GM23248 (cell line): ENCODE measurements at regions of chr16 and their contacts with region 1.

Region 1: GRCh38 chr16:77971306-77972271 is 50.8 kb upstream of the CLEC3A start:
- DNase-seq: peak; percentile 85
- H3K4me3 ChIP-seq: no peak overlapping the region
- H3K27ac ChIP-seq: no peak overlapping the region
- H3K4me1 ChIP-seq: no peaks in the 10 kb centered on the region
- H3K27me3 ChIP-seq: no peaks in the 10 kb centered on the region

Region 2: DNA sequence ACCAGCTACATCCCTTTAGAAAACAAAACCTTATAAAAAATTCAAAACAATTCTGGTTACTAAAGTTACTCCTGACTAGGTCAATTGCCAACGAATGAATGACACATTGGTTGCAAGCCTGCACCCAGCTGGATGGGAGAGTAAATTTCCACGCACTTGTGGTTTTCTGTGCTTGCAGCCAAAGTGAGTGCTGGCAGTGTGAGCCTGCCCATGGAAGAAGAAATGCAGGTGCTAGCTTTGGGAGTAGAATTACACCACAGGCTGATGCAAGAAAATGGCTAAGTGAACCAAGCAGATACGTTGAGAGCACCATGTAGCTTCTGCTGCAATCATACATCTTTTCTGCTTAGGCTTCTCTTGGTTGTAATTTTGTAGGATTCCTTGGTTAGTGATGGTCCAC is 697.8 kb before region 1 on chr16:
- in situ Hi-C with region 1: no loop called
- DNase-seq: no peak
- H3K4me3 ChIP-seq: no peak overlapping the region
- H3K27ac ChIP-seq: no peak overlapping the region
- H3K4me1 ChIP-seq: no peaks in the 10 kb centered on the region
- H3K27me3 ChIP-seq: peaks cover 15% of the 10 kb centered on the region; the same call in 1 of the 2 replicates

Region 3: GRCh38 chr16:77675464-77676324 is 295.9 kb before region 1 on chr16:
- in situ Hi-C with region 1: loop called (anchors 5 kb)
- DNase-seq: peak; percentile 81
- H3K4me3 ChIP-seq: peak overlapping the region; percentile 17; the same call in 1 of the 2 replicates
- H3K27ac ChIP-seq: 0 out of 2 replicates have a peak overlapping the region, but pooled peaks have one; percentile 4
- H3K4me1 ChIP-seq: peaks cover 13% of the 10 kb centered on the region
- H3K27me3 ChIP-seq: 0 out of 2 replicates have a peak, but pooled peaks cover 4% of the 10 kb centered on the region

Region 4: DNA sequence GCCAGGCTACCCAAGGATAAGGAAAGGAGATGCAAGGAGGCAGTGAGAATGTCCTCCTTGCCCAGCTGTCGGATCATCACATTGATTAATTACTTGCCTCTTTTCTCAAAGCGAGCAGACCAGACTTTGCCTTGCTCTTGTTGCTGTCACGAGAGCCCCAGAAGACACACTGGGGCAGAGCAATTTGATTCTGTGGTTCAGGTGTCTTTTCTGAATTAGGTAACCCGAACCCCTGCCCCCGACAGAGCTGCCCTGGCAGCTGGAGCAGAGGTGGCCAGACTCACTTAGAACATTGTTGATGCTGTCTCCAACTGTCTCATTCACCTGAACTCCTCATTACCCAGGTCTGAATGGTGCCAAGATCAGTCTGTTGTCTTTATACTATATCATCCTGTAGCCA is 148.9 kb before region 1 on chr16:
- in situ Hi-C with region 1: no loop called
- DNase-seq: no peak
- H3K4me3 ChIP-seq: no peak overlapping the region
- H3K27ac ChIP-seq: no peak overlapping the region
- H3K4me1 ChIP-seq: no peaks in the 10 kb centered on the region
- H3K27me3 ChIP-seq: no peaks in the 10 kb centered on the region